Activated CD4-positive, alpha-beta memory T cell treated with anti-CD3 and anti-CD28 coated beads for 36 hours (primary cell): ENCODE measurements at regions of chr11 and their contacts with region 1.

Region 1: GRCh38 chr11:94623120-94623735 is 56.1 kb downstream of the PIWIL4 start:
- DNase-seq: peak; percentile 62
- H3K4me3 Mint-ChIP-seq: no peak overlapping the region
- H3K27ac Mint-ChIP-seq: no peak overlapping the region
- H3K4me1 Mint-ChIP-seq: no peaks in the 10 kb centered on the region
- H3K27me3 Mint-ChIP-seq: peaks cover 8% of the 10 kb centered on the region

Region 2: GRCh38 chr11:94786264-94787126 is 163.3 kb after region 1 on chr11:
- CTCF ChIA-PET with region 1: no interaction called
- POLR2A ChIA-PET with region 1: no interaction called
- intact Hi-C with region 1: loop called (anchors 10 kb)
- DNase-seq: no peak
- H3K4me3 Mint-ChIP-seq: no peak overlapping the region
- H3K27ac Mint-ChIP-seq: no peak overlapping the region
- H3K4me1 Mint-ChIP-seq: no peaks in the 10 kb centered on the region
- H3K27me3 Mint-ChIP-seq: peaks cover 1% of the 10 kb centered on the region

Region 3: GRCh38 chr11:95764267-95764898 is 1141.2 kb after region 1 on chr11:
- CTCF ChIA-PET with region 1: no interaction called
- POLR2A ChIA-PET with region 1: no interaction called
- intact Hi-C with region 1: loop called (anchors 10 kb)
- DNase-seq: no peak
- H3K4me3 Mint-ChIP-seq: no peak overlapping the region
- H3K27ac Mint-ChIP-seq: no peak overlapping the region
- H3K4me1 Mint-ChIP-seq: no peaks in the 10 kb centered on the region
- H3K27me3 Mint-ChIP-seq: no peaks in the 10 kb centered on the region